Naive thymus-derived CD4-positive, alpha-beta T cell (primary cell): ENCODE measurements at regions of chr6 and their contacts with region 1.

Region 1: GRCh38 chr6:123802697-123803496 is 768 bp upstream of the NKAIN2 start:
- DNase-seq: peak in 7 of 9 donors; percentile 24 to 71 (median 30)
- ATAC-seq: peak; percentile 75
- H3K4me3 ChIP-seq: no peak overlapping the region
- H3K4me3 Mint-ChIP-seq: peak overlapping the region in 9 of 10 donors; percentile 29 to 78 (median 60)
- H3K27ac ChIP-seq: no peak overlapping the region
- H3K27ac Mint-ChIP-seq: no peak overlapping the region
- H3K4me1 ChIP-seq: no peaks in the 10 kb centered on the region
- H3K4me1 Mint-ChIP-seq: peaks cover 4 to 14% (median 8%) of the 10 kb centered on the region in 7 donors
- H3K27me3 ChIP-seq: no peaks in the 10 kb centered on the region
- H3K27me3 Mint-ChIP-seq: peaks cover 44 to 59% (median 50%) of the 10 kb centered on the region in 5 donors

Region 2: GRCh38 chr6:123777563-123777962 is 25.3 kb before region 1 on chr6:
- CTCF ChIA-PET with region 1: no interaction called
- POLR2A ChIA-PET with region 1: no interaction called
- intact Hi-C with region 1: no loop called
- DNase-seq: no peak
- ATAC-seq: no peak
- H3K4me3 ChIP-seq: no peak overlapping the region
- H3K4me3 Mint-ChIP-seq: no peak overlapping the region
- H3K27ac ChIP-seq: no peak overlapping the region
- H3K27ac Mint-ChIP-seq: no peak overlapping the region
- H3K4me1 ChIP-seq: no peaks in the 10 kb centered on the region
- H3K4me1 Mint-ChIP-seq: no peaks in the 10 kb centered on the region
- H3K27me3 ChIP-seq: no peaks in the 10 kb centered on the region
- H3K27me3 Mint-ChIP-seq: no peaks in the 10 kb centered on the region

Region 3: DNA sequence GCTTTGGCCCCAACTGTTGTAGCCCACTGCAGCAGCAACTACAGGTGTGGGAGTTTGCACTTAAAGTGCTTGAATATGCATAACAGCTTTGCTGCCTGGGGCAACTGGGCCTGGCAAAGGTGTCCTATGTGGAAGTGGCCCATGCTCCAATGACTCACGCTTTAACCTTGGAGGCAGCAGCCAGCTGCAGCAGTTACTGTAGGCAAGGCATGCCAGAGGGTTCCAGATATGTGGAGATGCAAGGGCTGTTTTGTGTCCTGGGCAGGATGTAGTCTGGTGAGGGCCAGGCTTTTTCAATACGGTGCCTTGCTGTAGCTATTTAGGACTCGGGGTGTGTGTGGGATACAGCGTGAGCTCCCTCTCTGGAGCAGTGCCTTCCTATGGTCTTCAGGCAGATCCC is 151.0 kb after region 1 on chr6:
- CTCF ChIA-PET with region 1: no interaction called
- POLR2A ChIA-PET with region 1: no interaction called
- intact Hi-C with region 1: no loop called
- DNase-seq: no peak
- ATAC-seq: no peak
- H3K4me3 ChIP-seq: no peak overlapping the region
- H3K4me3 Mint-ChIP-seq: no peak overlapping the region
- H3K27ac ChIP-seq: no peak overlapping the region
- H3K27ac Mint-ChIP-seq: no peak overlapping the region
- H3K4me1 ChIP-seq: no peaks in the 10 kb centered on the region
- H3K4me1 Mint-ChIP-seq: no peaks in the 10 kb centered on the region
- H3K27me3 ChIP-seq: no peaks in the 10 kb centered on the region
- H3K27me3 Mint-ChIP-seq: no peaks in the 10 kb centered on the region

Region 4: DNA sequence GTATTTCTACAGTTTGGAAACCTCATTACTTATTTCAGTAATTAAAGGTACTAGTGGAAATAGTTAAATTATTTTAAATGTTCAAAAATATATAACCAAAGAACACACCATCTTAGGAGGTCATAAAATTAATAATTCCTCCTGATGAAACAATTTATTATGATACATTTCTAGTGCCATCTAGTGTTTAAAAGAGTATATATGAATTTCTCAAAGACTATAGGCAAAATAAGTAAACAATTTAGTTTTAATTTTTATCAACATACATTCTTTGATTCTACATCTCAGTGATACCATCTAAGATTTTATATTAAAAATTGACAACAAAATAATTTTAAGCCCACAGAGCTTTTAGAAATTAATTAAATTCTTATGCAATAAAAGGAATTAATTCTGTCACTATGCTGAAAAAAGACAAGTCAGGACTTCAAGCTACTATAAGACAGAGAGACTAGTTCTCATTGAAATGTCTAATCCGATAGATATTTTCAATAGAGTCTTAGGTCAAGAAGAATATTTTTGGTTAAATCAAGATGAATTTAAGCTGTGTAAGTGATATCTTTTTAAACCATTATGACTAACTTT is 1051.5 kb after region 1 on chr6:
- CTCF ChIA-PET with region 1: no interaction called
- POLR2A ChIA-PET with region 1: no interaction called
- intact Hi-C with region 1: loop called in 1 of 2 experiments (anchors 5 kb)
- DNase-seq: no peak
- ATAC-seq: no peak
- H3K4me3 ChIP-seq: no peak overlapping the region
- H3K4me3 Mint-ChIP-seq: no peak overlapping the region
- H3K27ac ChIP-seq: no peak overlapping the region
- H3K27ac Mint-ChIP-seq: no peak overlapping the region
- H3K4me1 ChIP-seq: no peaks in the 10 kb centered on the region
- H3K4me1 Mint-ChIP-seq: no peaks in the 10 kb centered on the region
- H3K27me3 ChIP-seq: no peaks in the 10 kb centered on the region
- H3K27me3 Mint-ChIP-seq: peaks cover 0 to 14% (median 2%) of the 10 kb centered on the region in 5 donors